ENCODE measurements at regions of chr18 and their contacts with region 1.

Region 1: GRCh38 chr18:23703057-23703986 is 14.1 kb downstream of the LAMA3 start:
- DNase-seq: peak; percentile 50
- ATAC-seq: peak; percentile 89
- H3K4me3 ChIP-seq: no peak overlapping the region
- H3K27ac ChIP-seq: no peak overlapping the region
- H3K4me1 ChIP-seq: no peaks in the 10 kb centered on the region
- H3K27me3 ChIP-seq: peaks cover 2 to 7% of the 10 kb centered on the region in 2 experiments; a peak in 3 of 5 replicates
- CTCF ChIP-seq: peak; percentile 75
- EP300 ChIP-seq: no peak
- POLR2A ChIP-seq: no peak
- RAD21 ChIP-seq: peak; percentile 71; the same call in 1 of the 2 replicates

Region 2: DNA sequence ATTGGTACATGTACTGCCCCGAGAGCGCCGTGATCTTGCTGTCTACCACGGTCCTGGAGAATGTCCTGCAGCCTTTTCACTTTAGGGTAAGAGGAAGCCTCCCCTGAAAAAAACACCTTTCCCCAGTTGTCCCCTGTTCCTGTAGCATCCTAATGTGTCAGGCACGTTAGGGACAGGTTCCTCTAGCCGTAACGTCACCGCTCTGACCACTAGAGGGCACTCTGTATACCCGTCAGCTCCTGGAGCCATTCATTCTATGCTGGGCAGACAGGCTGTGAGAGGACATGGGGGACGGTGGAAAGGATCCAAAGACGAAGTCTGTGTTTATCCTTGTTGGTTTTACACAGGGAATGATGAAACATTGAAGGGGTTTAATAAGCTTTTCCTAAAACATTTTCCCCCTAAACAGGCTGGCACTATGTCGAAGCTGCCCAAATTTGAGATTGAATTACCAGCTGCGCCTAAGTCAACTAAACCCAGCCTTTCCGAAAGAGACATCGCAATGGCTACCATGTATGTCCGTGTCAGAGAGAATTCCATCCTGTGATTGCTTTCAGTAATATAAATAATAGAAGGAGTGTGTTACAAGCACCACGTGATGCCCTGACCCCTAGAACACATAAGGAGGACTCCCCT is 187.3 kb before region 1 on chr18:
- CTCF ChIA-PET with region 1: interaction called, 3 read pairs
- POLR2A ChIA-PET with region 1: no interaction called
- in situ Hi-C with region 1: loop called (anchors 10 kb)
- intact Hi-C with region 1: loop called (anchors 10 kb)
- DNase-seq: peak; percentile 76
- ATAC-seq: peak; percentile 99
- H3K4me3 ChIP-seq: no peak overlapping the region
- H3K27ac ChIP-seq: peak overlapping the region; percentile 17
- H3K4me1 ChIP-seq: peaks cover 5% of the 10 kb centered on the region; the same call in 1 of the 2 replicates
- H3K27me3 ChIP-seq: no peaks in the 10 kb centered on the region
- CTCF ChIP-seq: peak; percentile 96
- EP300 ChIP-seq: no peak
- POLR2A ChIP-seq: no peak
- RAD21 ChIP-seq: peak; percentile 72

Region 3: DNA sequence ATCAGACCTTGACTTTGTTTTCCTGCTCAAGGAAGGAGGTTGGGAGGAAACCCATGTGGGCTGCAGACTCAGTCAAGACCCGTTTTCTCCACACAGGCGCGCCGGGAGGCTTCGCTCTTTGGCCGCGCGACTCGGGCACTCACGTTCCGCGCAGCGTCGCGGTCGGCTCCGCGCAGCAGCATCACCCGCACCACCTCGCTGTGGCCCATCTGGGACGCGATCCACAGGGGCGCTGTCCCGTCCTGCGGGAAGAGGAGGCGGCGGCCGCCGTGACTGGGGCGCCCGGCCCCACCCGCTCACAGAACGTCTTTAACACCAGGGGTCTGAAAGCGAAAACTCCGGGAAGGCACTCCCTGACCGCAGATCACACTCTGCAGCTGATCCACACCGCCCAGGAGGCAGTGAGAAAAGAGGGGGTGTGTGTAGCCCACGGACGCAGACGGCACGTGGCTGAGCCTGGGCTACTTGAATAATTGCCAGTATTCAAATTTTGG is 83.9 kb before region 1 on chr18:
- CTCF ChIA-PET with region 1: interaction called, 29 read pairs
- POLR2A ChIA-PET with region 1: no interaction called
- in situ Hi-C with region 1: loop called (anchors 5 kb)
- intact Hi-C with region 1: loop called (anchors 1 kb)
- DNase-seq: no peak
- ATAC-seq: peak; percentile 48
- H3K4me3 ChIP-seq: peak overlapping the region; percentile 30 to 69 (median 31); a peak in 5 of 6 replicates
- H3K27ac ChIP-seq: no peak overlapping the region
- H3K4me1 ChIP-seq: peaks cover 28% of the 10 kb centered on the region
- H3K27me3 ChIP-seq: peaks cover 1 to 31% of the 10 kb centered on the region in 2 experiments; a peak in 3 of 5 replicates
- CTCF ChIP-seq: no peak
- EP300 ChIP-seq: no peak
- POLR2A ChIP-seq: no peak
- RAD21 ChIP-seq: no peak

Region 4: GRCh38 chr18:23640023-23640422 is 63.3 kb before region 1 on chr18:
- CTCF ChIA-PET with region 1: no interaction called
- POLR2A ChIA-PET with region 1: no interaction called
- in situ Hi-C with region 1: no loop called
- intact Hi-C with region 1: loop called (anchors 5 kb)
- DNase-seq: peak; percentile 22
- ATAC-seq: peak; percentile 96
- H3K4me3 ChIP-seq: no peak overlapping the region
- H3K27ac ChIP-seq: no peak overlapping the region
- H3K4me1 ChIP-seq: peaks cover 20% of the 10 kb centered on the region
- H3K27me3 ChIP-seq: peaks cover 0 to 7% of the 10 kb centered on the region in 2 experiments; a peak in 1 of 5 replicates
- CTCF ChIP-seq: peak; percentile 47
- EP300 ChIP-seq: no peak
- POLR2A ChIP-seq: no peak
- RAD21 ChIP-seq: no peak